HepG2 (cell line): ENCODE measurements at regions of chr7 and their contacts with region 1.

Region 1: DNA sequence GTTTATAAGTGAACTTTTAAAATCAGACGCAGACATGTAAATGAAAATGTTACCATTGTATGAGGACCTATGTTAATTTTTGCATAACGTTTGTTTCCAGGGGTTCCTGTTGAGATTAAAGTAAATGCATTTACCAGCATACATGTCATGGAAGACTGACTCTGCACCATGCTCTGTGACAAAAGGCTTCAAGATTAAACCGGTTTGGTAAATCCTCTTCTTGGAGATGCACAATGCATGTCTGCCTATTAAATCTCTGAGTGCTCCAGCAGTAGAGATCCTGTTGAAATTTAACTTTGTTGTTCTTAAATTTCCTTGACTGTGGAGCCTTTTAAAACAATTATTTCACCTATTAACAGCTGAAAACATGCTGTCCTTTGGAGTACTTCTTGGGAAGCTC is 36.5 kb upstream of the JAZF1 start:
- DNase-seq: no peak
- ATAC-seq: no peak
- H3K4me3 ChIP-seq: no peak overlapping the region
- H3K27ac ChIP-seq: no peak overlapping the region
- H3K4me1 ChIP-seq: no peaks in the 10 kb centered on the region
- H3K27me3 ChIP-seq: no peaks in the 10 kb centered on the region
- CTCF ChIP-seq: no peak
- EP300 ChIP-seq: no peak
- POLR2A ChIP-seq: no peak
- RAD21 ChIP-seq: no peak

Region 2: GRCh38 chr7:27501001-27501400 is 716.1 kb before region 1 on chr7:
- CTCF ChIA-PET with region 1: no interaction called
- POLR2A ChIA-PET with region 1: no interaction called
- in situ Hi-C with region 1: no loop called
- intact Hi-C with region 1: loop called (anchors 5 kb)
- DNase-seq: no peak
- ATAC-seq: no peak
- H3K4me3 ChIP-seq: no peak overlapping the region
- H3K27ac ChIP-seq: no peak overlapping the region
- H3K4me1 ChIP-seq: no peaks in the 10 kb centered on the region
- H3K27me3 ChIP-seq: no peaks in the 10 kb centered on the region
- CTCF ChIP-seq: no peak
- EP300 ChIP-seq: no peak
- POLR2A ChIP-seq: no peak
- RAD21 ChIP-seq: no peak

Region 3: DNA sequence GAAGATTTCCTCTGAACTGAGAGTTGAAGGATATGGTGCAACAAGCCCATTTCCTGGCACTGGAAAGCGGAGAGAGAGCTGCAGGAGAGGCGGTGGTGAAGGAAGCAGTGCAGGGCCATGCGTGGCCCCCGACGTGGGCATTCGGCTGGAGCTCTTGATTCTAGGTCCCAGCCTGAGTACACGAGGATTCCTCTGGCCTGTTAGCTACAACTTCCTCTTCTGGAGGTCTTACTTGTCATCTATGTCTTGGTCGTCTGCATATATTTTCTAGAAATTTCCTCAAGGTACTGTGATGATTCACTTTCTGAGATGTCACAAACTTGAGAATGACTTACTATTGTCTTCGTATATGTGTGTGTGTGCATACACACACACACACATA is 22.7 kb after region 1 on chr7:
- CTCF ChIA-PET with region 1: no interaction called
- POLR2A ChIA-PET with region 1: no interaction called
- in situ Hi-C with region 1: no loop called
- intact Hi-C with region 1: no loop called
- DNase-seq: no peak
- ATAC-seq: no peak
- H3K4me3 ChIP-seq: no peak overlapping the region
- H3K27ac ChIP-seq: no peak overlapping the region
- H3K4me1 ChIP-seq: no peaks in the 10 kb centered on the region
- H3K27me3 ChIP-seq: no peaks in the 10 kb centered on the region
- CTCF ChIP-seq: no peak
- EP300 ChIP-seq: no peak
- POLR2A ChIP-seq: no peak
- RAD21 ChIP-seq: no peak